ENCODE measurements at regions of chr13 and their contacts with region 1.

Region 1: GRCh38 chr13:70568571-70568970 is 460.3 kb upstream of the KLHL1 start:
- DNase-seq: no peak
- H3K4me3 Mint-ChIP-seq: no peak overlapping the region
- H3K27ac Mint-ChIP-seq: no peak overlapping the region
- H3K4me1 Mint-ChIP-seq: no peaks in the 10 kb centered on the region
- H3K27me3 Mint-ChIP-seq: no peaks in the 10 kb centered on the region

Region 2: GRCh38 chr13:69857183-69857821 is 711.3 kb before region 1 on chr13:
- CTCF ChIA-PET with region 1: no interaction called
- intact Hi-C with region 1: loop called (anchors 5 kb)
- DNase-seq: no peak
- H3K4me3 Mint-ChIP-seq: no peak overlapping the region
- H3K27ac Mint-ChIP-seq: no peak overlapping the region
- H3K4me1 Mint-ChIP-seq: no peaks in the 10 kb centered on the region
- H3K27me3 Mint-ChIP-seq: no peaks in the 10 kb centered on the region

Region 3: DNA sequence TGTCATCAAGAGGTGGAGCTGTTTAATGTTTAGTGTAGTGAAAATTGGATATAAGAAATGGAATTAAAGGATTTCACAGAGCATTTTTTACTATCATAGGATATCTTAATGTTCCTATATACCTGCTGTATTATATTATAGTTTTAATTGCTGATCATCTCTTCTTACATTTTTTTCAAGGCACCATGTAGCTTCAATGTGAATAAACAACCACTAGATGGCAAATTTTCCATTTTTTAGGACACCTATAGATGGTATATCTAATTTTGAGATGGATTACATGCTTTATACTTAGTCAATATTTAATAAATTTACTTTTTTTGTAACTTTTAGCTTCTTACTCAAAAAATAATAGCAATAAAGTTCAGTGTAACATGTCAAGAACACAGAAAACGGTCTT is 469.9 kb before region 1 on chr13:
- CTCF ChIA-PET with region 1: no interaction called
- intact Hi-C with region 1: loop called (anchors 2 kb)
- DNase-seq: no peak
- H3K4me3 Mint-ChIP-seq: no peak overlapping the region
- H3K27ac Mint-ChIP-seq: no peak overlapping the region
- H3K4me1 Mint-ChIP-seq: no peaks in the 10 kb centered on the region
- H3K27me3 Mint-ChIP-seq: no peaks in the 10 kb centered on the region

Region 4: GRCh38 chr13:70534466-70534865 is 34.1 kb before region 1 on chr13:
- CTCF ChIA-PET with region 1: no interaction called
- intact Hi-C with region 1: no loop called
- DNase-seq: no peak
- H3K4me3 Mint-ChIP-seq: no peak overlapping the region
- H3K27ac Mint-ChIP-seq: no peak overlapping the region
- H3K4me1 Mint-ChIP-seq: no peaks in the 10 kb centered on the region
- H3K27me3 Mint-ChIP-seq: no peaks in the 10 kb centered on the region

Measured in activated naive CD4-positive, alpha-beta T cell treated with anti-CD3 and anti-CD28 coated beads for 36 hours (primary cell).